ENCODE measurements at regions of chr20 and their contacts with region 1.

Region 1: GRCh38 chr20:52083627-52084232 is 107.8 kb downstream of the ZFP64 start:
- DNase-seq: no peak
- ATAC-seq: peak; percentile 34; the same call in 1 of the 3 replicates
- H3K4me3 ChIP-seq: no peak overlapping the region
- H3K27ac ChIP-seq: no peak overlapping the region
- H3K4me1 ChIP-seq: no peaks in the 10 kb centered on the region
- H3K27me3 ChIP-seq: no peaks in the 10 kb centered on the region
- CTCF ChIP-seq: peak; percentile 35 to 52 (median 40); a peak in 5 of 6 replicates
- EP300 ChIP-seq: no peak
- POLR2A ChIP-seq: no peak
- RAD21 ChIP-seq: peak; percentile 60

Region 2: GRCh38 chr20:51695574-51696303 is 388.0 kb before region 1 on chr20:
- CTCF ChIA-PET with region 1: interaction called, 7 read pairs
- POLR2A ChIA-PET with region 1: no interaction called
- RAD21 ChIA-PET with region 1: interaction called, 5 read pairs
- SMC1A ChIA-PET with region 1: no interaction called
- in situ Hi-C with region 1: no loop called
- intact Hi-C with region 1: loop called (anchors 2 kb)
- DNase-seq: no peak
- ATAC-seq: no peak
- H3K4me3 ChIP-seq: no peak overlapping the region
- H3K27ac ChIP-seq: no peak overlapping the region
- H3K4me1 ChIP-seq: no peaks in the 10 kb centered on the region
- H3K27me3 ChIP-seq: peaks cover 4% of the 10 kb centered on the region in 2 experiments; a peak in 3 of 4 replicates
- CTCF ChIP-seq: no peak
- EP300 ChIP-seq: no peak
- POLR2A ChIP-seq: no peak
- RAD21 ChIP-seq: no peak

Region 3: GRCh38 chr20:51797357-51798028 is 286.2 kb before region 1 on chr20:
- CTCF ChIA-PET with region 1: no interaction called
- POLR2A ChIA-PET with region 1: no interaction called
- RAD21 ChIA-PET with region 1: no interaction called
- SMC1A ChIA-PET with region 1: no interaction called
- in situ Hi-C with region 1: no loop called
- intact Hi-C with region 1: loop called (anchors 5 kb)
- DNase-seq: no peak
- ATAC-seq: no peak
- H3K4me3 ChIP-seq: no peak overlapping the region
- H3K27ac ChIP-seq: no peak overlapping the region
- H3K4me1 ChIP-seq: no peaks in the 10 kb centered on the region
- H3K27me3 ChIP-seq: peaks cover 5 to 15% of the 10 kb centered on the region in 2 experiments
- CTCF ChIP-seq: no peak
- EP300 ChIP-seq: no peak
- POLR2A ChIP-seq: no peak
- RAD21 ChIP-seq: no peak

Region 4: DNA sequence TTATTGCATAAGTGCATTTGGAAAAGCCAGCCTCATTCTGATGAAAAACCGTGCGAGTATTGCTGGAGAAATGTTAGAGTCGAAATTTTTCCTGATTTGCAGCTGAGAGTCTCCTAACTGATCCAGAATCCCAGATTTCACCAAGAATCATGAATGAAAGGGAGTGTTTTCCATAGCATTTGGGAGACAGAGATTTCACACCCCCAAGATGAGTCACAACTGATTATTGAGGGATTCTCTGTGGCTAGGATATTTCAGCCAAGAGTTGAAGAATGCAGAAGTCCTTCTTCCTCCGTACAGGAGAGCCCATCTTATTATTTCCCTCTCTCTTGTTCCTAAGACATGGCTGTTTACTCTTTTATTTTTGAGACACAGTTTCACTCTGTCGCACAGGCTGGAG is 199.2 kb before region 1 on chr20:
- CTCF ChIA-PET with region 1: no interaction called
- POLR2A ChIA-PET with region 1: no interaction called
- RAD21 ChIA-PET with region 1: no interaction called
- SMC1A ChIA-PET with region 1: no interaction called
- in situ Hi-C with region 1: no loop called
- intact Hi-C with region 1: no loop called
- DNase-seq: no peak
- ATAC-seq: no peak
- H3K4me3 ChIP-seq: no peak overlapping the region
- H3K27ac ChIP-seq: no peak overlapping the region
- H3K4me1 ChIP-seq: no peaks in the 10 kb centered on the region
- H3K27me3 ChIP-seq: no peaks in the 10 kb centered on the region
- CTCF ChIP-seq: no peak
- EP300 ChIP-seq: no peak
- POLR2A ChIP-seq: no peak
- RAD21 ChIP-seq: no peak

Measured in GM12878 (cell line).